CD8-positive, alpha-beta memory T cell (primary cell): ENCODE measurements at regions of chr15 and their contacts with region 1.

Region 1: DNA sequence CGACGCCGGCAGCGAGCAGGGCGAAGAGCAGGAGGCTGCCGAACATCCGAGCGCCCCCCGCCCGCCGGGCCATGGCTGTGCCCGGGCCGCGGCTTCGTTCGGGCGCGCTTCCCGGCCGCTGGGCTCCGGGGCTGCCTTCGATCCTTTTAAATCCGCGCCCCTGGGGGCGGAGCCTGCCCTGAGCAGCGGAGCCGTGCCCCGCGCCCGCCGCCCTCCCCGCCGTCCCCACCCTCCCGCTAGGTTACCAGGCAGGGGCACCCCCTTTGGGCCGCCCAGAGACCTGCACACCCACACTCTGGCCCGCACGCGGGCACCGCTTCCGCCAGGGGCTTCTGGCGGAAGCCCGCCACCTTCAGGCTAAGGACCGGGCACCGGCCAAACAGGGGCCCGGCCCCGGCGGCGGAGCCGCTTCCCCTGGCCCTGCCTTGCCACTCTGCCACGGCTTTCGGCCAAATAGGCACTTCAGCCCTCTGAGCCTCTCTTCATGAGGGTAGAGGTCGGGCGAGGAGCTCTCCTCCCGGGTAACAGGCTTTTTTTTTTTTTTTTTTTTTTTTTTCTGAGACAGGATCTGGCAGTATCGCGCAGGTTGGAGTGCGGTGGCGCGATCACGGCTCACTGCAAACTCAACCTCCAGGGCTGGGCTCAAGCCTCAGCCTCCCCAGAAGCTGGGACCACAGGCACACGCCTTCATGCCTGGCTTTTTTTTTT is at the start of gene NMB:
- DNase-seq: peak; percentile 81 to 91 (median 86)
- H3K4me3 ChIP-seq: peak within 1 kb of the TSS; percentile 64
- H3K4me3 Mint-ChIP-seq: peak within 1 kb of the TSS; percentile 73 to 94 (median 80)
- H3K27ac ChIP-seq: peak within 1 kb of the TSS; percentile 68
- H3K27ac Mint-ChIP-seq: peak within 1 kb of the TSS; percentile 29 to 91 (median 79)
- H3K4me1 ChIP-seq: peaks cover 25% of the 10 kb centered on the region
- H3K4me1 Mint-ChIP-seq: peaks cover 30 to 49% (median 47%) of the 10 kb centered on the region in 3 donors
- H3K27me3 ChIP-seq: no peaks in the 10 kb centered on the region
- H3K27me3 Mint-ChIP-seq: peaks cover 0 to 2% of the 10 kb centered on the region in 2 donors
- total RNA-seq, gene NMB: 3.6 to 5.2 TPM

Region 2: GRCh38 chr15:84600851-84601838 is 57.1 kb before region 1 on chr15 and contains the start of gene ZSCAN2:
- CTCF ChIA-PET with region 1: interaction called, 12 read pairs
- POLR2A ChIA-PET with region 1: interaction called, 10 read pairs
- DNase-seq: peak; percentile 89 to 94 (median 93)
- H3K4me3 ChIP-seq: peak within 1 kb of the TSS; percentile 96
- H3K4me3 Mint-ChIP-seq: peak within 1 kb of the TSS; percentile 94 to 99 (median 98)
- H3K27ac ChIP-seq: peak within 1 kb of the TSS; percentile 60
- H3K27ac Mint-ChIP-seq: peak within 1 kb of the TSS; percentile 58 to 93 (median 84)
- H3K4me1 ChIP-seq: peaks cover 42% of the 10 kb centered on the region
- H3K4me1 Mint-ChIP-seq: peaks cover 57 to 85% (median 82%) of the 10 kb centered on the region in 3 donors
- H3K27me3 ChIP-seq: no peaks in the 10 kb centered on the region
- H3K27me3 Mint-ChIP-seq: no peaks in the 10 kb centered on the region
- total RNA-seq, gene ZSCAN2: 13.5 to 14.3 TPM

Region 3: DNA sequence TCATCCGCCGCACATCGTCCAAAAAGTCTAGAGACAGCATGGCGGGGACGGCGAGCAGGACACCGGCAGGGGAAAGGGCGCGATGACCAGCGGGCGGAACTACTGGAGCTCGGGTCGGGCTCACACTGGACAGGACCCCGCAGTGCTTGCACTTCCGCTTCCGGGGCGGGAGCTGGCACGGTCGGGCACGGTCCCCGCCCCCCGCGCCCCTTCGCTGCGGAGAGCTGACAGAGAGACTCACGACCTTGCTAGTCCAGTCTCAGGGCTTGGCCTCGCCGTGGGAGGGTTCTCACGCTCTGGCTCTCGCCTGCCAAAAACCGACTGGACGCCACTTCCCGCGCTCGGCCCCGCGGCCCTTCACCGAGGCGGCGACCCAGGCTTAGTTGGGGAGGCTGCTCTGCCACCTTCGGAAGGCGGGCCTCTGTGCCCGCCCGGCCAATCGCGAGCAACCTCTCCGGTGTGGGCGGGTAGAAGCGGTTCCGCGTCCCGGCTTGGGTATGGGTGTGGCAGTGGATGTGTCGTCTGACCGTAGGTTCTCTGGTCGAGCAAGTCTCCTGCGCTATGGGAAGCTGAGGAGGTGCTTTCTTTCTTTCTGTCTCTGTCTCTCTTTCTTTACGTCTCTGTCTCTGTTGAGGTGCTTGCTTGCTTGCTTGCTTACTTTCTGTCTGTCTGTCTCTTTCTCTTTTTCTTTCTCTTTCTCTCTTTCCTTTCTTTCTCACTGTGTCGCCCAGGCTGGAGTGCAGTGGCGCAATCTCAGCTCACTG is 58.0 kb after region 1 on chr15 and contains the start of gene SEC11A:
- CTCF ChIA-PET with region 1: interaction called, 13 read pairs
- POLR2A ChIA-PET with region 1: interaction called, 11 read pairs
- DNase-seq: peak; percentile 88 to 95 (median 89)
- H3K4me3 ChIP-seq: peak within 1 kb of the TSS; percentile 99
- H3K4me3 Mint-ChIP-seq: peak within 1 kb of the TSS; percentile 92 to 98 (median 95)
- H3K27ac ChIP-seq: peak within 1 kb of the TSS; percentile 94
- H3K27ac Mint-ChIP-seq: peak within 1 kb of the TSS; percentile 93 to 100 (median 96)
- H3K4me1 ChIP-seq: peaks cover 41% of the 10 kb centered on the region
- H3K4me1 Mint-ChIP-seq: peaks cover 38 to 69% (median 60%) of the 10 kb centered on the region in 3 donors
- H3K27me3 ChIP-seq: no peaks in the 10 kb centered on the region
- H3K27me3 Mint-ChIP-seq: no peaks in the 10 kb centered on the region
- total RNA-seq, gene SEC11A: 132 to 133 TPM

Region 4: GRCh38 chr15:84748274-84749110 is 90.3 kb after region 1 on chr15 and contains the start of gene ZNF592:
- CTCF ChIA-PET with region 1: interaction called, 10 read pairs
- POLR2A ChIA-PET with region 1: interaction called, 7 read pairs
- DNase-seq: peak; percentile 77 to 87 (median 81)
- H3K4me3 ChIP-seq: peak within 1 kb of the TSS; percentile 91
- H3K4me3 Mint-ChIP-seq: peak within 1 kb of the TSS; percentile 93 to 100 (median 98)
- H3K27ac ChIP-seq: peak within 1 kb of the TSS; percentile 91
- H3K27ac Mint-ChIP-seq: peak within 1 kb of the TSS; percentile 93 to 100 (median 99)
- H3K4me1 ChIP-seq: peaks cover 52% of the 10 kb centered on the region
- H3K4me1 Mint-ChIP-seq: peaks cover 62 to 75% (median 71%) of the 10 kb centered on the region in 3 donors
- H3K27me3 ChIP-seq: no peaks in the 10 kb centered on the region
- H3K27me3 Mint-ChIP-seq: peaks cover 0 to 3% of the 10 kb centered on the region in 2 donors
- total RNA-seq, gene ZNF592: 31.2 to 33.1 TPM

Region 5: DNA sequence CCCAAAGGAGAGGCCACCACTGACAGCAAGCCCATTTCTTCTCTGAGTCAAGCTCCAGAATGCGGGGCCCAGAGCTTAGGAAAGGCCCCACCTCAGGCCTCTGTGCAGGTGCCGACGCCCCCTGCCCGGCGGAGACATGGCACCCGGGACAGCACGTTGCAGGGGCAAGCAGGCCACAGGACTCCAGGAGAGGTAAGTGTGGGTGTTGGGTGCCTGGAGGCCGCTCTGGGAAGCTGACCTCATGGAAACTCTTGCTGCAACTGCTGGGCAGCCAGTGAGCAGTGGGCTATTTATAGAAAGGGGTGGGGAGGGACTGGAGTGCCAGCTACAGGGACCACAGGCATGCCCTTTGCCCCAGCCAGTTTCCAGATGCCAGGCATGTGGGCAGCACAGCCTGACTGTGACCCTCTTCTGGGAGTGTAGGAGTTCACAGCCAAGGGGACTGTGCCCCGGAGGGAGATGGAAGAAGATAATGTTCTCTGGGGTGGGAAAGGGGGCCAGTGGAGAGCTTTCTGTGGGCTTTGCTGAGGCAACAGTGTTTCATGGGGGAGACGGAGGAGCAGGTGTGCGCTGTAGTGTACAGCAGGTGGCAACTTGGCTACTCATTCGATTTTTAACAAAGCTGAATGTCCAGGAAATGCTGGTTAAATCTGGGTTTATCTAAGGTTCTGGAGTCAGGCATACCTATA is 182.7 kb after region 1 on chr15:
- CTCF ChIA-PET with region 1: no interaction called
- POLR2A ChIA-PET with region 1: no interaction called
- DNase-seq: no peak
- H3K4me3 ChIP-seq: no peak overlapping the region
- H3K4me3 Mint-ChIP-seq: peak overlapping the region in 1 of 7 donors; percentile 56
- H3K27ac ChIP-seq: no peak overlapping the region
- H3K27ac Mint-ChIP-seq: no peak overlapping the region
- H3K4me1 ChIP-seq: no peaks in the 10 kb centered on the region
- H3K4me1 Mint-ChIP-seq: no peaks in the 10 kb centered on the region
- H3K27me3 ChIP-seq: peaks cover 4% of the 10 kb centered on the region
- H3K27me3 Mint-ChIP-seq: peaks cover 4 to 18% of the 10 kb centered on the region in 2 donors